Activated CD4-positive, alpha-beta T cell treated with anti-CD3 and anti-CD28 coated beads for 36 hours (primary cell): ENCODE measurements at regions of chr1 and their contacts with region 1.

Region 1: GRCh38 chr1:32773018-32773763 is 44.0 kb downstream of the YARS1 start:
- DNase-seq: peak; percentile 88
- ATAC-seq: peak; percentile 84
- H3K4me3 Mint-ChIP-seq: no peak overlapping the region
- H3K27ac Mint-ChIP-seq: no peak overlapping the region
- H3K4me1 Mint-ChIP-seq: peaks cover 16% of the 10 kb centered on the region
- H3K27me3 Mint-ChIP-seq: no peaks in the 10 kb centered on the region

Region 2: GRCh38 chr1:32448773-32449456 is 324.3 kb before region 1 on chr1:
- CTCF ChIA-PET with region 1: interaction called, 3 read pairs
- POLR2A ChIA-PET with region 1: no interaction called
- intact Hi-C with region 1: loop called in 1 of 2 experiments (anchors 2 kb)
- DNase-seq: peak; percentile 37
- ATAC-seq: no peak
- H3K4me3 Mint-ChIP-seq: no peak overlapping the region
- H3K27ac Mint-ChIP-seq: no peak overlapping the region
- H3K4me1 Mint-ChIP-seq: no peaks in the 10 kb centered on the region
- H3K27me3 Mint-ChIP-seq: peaks cover 12% of the 10 kb centered on the region

Region 3: GRCh38 chr1:32666901-32667566 is 106.2 kb before region 1 on chr1:
- CTCF ChIA-PET with region 1: no interaction called
- POLR2A ChIA-PET with region 1: no interaction called
- intact Hi-C with region 1: loop called in 1 of 2 experiments (anchors 5 kb)
- DNase-seq: no peak
- ATAC-seq: no peak
- H3K4me3 Mint-ChIP-seq: no peak overlapping the region
- H3K27ac Mint-ChIP-seq: no peak overlapping the region
- H3K4me1 Mint-ChIP-seq: peaks cover 2% of the 10 kb centered on the region
- H3K27me3 Mint-ChIP-seq: no peaks in the 10 kb centered on the region

Region 4: DNA sequence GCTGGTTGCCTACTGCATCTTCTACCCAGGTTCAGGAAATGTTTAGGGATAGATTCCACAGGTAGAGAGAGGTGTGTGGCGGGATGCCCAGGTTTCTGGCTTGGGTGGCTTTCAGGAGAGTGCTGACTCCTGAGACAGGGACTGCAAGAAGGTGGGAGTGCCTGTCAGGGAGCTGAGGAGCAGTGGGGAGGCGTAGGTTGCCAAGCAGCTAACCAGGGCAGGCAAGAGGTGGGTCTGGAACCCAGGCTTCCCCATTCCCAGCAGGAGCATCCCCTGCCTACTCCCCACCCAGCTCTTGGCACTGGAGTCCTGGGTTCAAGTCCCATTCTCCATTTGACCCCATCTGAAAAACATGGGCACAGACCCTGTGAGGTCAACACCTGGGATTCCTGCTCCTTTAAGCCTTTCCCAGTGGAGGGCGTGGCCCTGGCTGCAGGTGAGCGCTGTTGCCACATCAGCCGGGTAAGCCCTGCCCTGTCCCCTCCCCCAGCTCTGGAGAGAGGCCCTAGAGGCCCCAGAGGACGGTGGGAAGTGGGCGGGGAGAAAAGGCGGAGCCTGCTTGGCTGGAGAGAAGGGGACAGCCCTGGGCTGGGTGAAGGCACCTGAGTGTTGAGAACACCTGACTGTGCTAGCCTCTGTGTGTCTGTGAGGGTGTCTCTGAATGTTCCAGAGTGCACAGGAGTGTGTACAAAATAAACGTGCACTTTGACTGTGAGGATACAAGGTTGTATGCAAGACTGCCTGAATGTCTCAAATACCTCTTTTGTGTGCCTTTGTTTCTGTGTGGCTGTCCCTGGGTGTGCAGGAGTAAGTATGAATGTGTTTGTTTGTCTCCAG is 56.7 kb before region 1 on chr1:
- CTCF ChIA-PET with region 1: interaction called, 156 read pairs
- POLR2A ChIA-PET with region 1: interaction called, 9 read pairs
- intact Hi-C with region 1: loop called (anchors 1 kb)
- DNase-seq: peak; percentile 88
- ATAC-seq: peak; percentile 93
- H3K4me3 Mint-ChIP-seq: no peak overlapping the region
- H3K27ac Mint-ChIP-seq: no peak overlapping the region
- H3K4me1 Mint-ChIP-seq: peaks cover 12% of the 10 kb centered on the region
- H3K27me3 Mint-ChIP-seq: peaks cover 2% of the 10 kb centered on the region

Region 5: GRCh38 chr1:32786856-32787255 is 13.7 kb after region 1 on chr1:
- CTCF ChIA-PET with region 1: interaction called, 18 read pairs
- POLR2A ChIA-PET with region 1: no interaction called
- intact Hi-C with region 1: no loop called
- DNase-seq: no peak
- ATAC-seq: peak; percentile 30
- H3K4me3 Mint-ChIP-seq: no peak overlapping the region
- H3K27ac Mint-ChIP-seq: peak overlapping the region; percentile 25
- H3K4me1 Mint-ChIP-seq: no peaks in the 10 kb centered on the region
- H3K27me3 Mint-ChIP-seq: no peaks in the 10 kb centered on the region

Region 6: DNA sequence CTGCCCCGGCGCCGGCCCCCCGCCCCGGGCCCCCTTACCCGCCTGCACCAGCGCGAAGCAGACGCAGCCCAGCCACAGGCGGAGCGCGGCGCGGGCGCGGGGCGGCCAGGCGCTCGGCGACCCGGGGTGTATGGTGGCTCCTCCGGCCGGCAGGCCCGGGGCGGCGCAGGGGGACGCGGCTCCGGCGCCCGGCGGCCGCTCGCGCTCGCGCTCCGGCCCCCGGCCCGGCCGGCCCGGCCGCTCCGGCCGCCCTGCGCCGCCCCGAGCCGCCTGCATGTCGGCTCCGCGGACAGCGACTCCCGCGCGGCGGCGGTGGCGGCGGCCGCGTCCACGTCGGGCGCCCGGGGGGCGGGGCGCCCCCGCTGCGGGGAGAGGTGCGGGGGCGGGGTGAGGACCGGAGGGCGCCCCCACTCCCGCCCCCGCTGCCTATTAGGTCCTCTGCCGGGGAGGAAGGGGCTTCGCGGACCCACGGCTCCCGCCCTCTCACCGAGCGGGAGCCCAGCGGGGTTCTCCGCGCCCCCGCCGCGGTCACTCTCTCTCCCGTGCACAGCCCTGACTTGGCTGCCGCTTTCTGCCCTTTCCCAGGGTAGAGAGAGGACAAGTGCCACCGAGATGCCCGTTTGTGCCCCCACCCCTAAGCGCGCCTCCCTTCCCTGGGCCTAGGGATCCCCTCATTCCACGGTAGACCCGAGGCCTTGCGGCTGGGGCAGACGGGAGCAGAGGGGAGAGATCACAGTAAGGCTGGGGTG is 97.6 kb after region 1 on chr1 and contains the start of gene FNDC5:
- CTCF ChIA-PET with region 1: interaction called, 4 read pairs
- POLR2A ChIA-PET with region 1: no interaction called
- intact Hi-C with region 1: loop called in 1 of 2 experiments (anchors 5 kb)
- DNase-seq: no peak
- ATAC-seq: no peak
- H3K4me3 Mint-ChIP-seq: no peak within 1 kb of the TSS
- H3K27ac Mint-ChIP-seq: no peak within 1 kb of the TSS
- H3K4me1 Mint-ChIP-seq: no peaks in the 10 kb centered on the region
- H3K27me3 Mint-ChIP-seq: peaks cover 42% of the 10 kb centered on the region
- total RNA-seq, gene FNDC5: not detected

Region 7: DNA sequence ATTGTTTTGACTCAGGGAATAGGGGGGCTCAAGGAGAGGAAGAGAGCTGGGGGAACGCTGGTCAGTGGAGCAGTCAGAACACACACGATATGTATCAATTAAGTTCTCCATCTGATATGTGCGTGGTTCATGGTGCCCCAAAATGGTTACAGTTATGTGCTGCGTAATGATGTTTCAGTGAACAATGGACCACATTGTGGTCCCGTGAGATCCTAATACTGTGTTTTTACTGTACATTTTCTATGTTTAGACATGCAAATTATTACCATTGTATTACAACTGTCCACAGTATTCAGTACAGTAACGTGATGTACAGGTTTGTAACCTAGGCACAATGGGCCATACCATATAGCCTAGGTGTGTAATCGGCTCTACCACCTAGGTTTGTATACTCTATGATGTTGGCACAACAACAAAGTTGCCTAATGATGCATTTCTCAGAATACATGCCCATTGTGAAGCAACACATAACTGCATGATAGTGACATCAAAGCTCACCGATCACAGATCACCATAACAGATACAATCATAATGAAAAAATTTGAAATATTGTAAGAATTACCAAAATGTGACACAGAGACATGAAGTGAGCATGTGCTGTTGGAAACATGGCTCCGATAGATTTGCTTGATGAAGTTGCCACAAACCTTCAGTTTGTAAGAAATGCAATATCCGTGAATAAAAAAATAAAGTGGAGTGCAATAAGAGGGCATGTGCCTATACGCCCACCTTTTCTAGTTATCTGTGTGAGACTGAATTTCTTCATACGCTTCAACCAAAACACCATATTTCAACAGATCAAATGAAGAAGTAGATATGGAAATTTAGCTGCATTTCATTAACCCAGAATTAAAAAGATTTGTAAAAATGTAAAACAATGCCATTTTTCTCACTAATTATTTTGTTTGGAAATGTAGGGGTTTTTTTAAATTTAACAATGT is 142.8 kb after region 1 on chr1:
- CTCF ChIA-PET with region 1: no interaction called
- POLR2A ChIA-PET with region 1: no interaction called
- intact Hi-C with region 1: no loop called
- DNase-seq: no peak
- ATAC-seq: no peak
- H3K4me3 Mint-ChIP-seq: no peak overlapping the region
- H3K27ac Mint-ChIP-seq: no peak overlapping the region
- H3K4me1 Mint-ChIP-seq: peaks cover 7% of the 10 kb centered on the region
- H3K27me3 Mint-ChIP-seq: peaks cover 13% of the 10 kb centered on the region